ENCODE measurements at regions of chr9 and their contacts with region 1.

Region 1: DNA sequence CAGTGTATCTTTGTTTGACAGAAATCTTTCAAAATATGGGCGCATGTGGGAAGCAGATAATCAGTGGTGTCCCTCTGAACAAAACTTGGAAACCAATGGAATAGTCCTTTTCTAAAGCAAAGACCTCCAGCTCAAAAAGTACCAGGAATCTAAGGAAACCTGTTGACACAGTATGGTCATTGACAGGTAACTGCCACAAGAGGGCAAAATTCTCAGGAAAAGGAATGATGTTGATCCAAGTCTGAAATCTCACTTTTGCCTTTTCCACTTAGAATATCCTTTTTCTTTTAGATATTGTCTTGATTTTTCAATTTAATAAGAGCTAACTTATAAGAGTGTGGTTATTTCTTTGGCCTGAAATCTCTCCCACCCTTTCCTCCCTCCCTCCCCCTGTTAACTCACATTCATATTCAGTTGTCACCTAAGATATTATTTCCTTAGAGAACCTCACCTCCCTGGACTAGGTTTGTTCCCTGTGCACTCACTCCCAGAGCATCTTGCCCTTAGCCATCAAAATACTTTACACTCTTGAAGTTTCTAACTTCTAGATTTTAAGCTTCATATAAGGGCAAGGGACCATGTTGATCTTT is 59.0 kb upstream of the BARX1 start:
- DNase-seq: peak; percentile 44 to 50 (median 48)
- ATAC-seq: peak; percentile 78
- H3K4me3 ChIP-seq: no peak overlapping the region
- H3K27ac ChIP-seq: no peak overlapping the region
- H3K4me1 ChIP-seq: no peaks in the 10 kb centered on the region
- H3K27me3 ChIP-seq: peaks cover 0 to 9% of the 10 kb centered on the region in 2 experiments; a peak in 4 of 5 replicates
- CTCF ChIP-seq: peak; percentile 47 to 65 (median 56)
- EP300 ChIP-seq: no peak
- POLR2A ChIP-seq: no peak
- RAD21 ChIP-seq: peak; percentile 43 to 79

Region 2: GRCh38 chr9:94065535-94065961 is 51.4 kb after region 1 on chr9:
- CTCF ChIA-PET with region 1: no interaction called
- POLR2A ChIA-PET with region 1: no interaction called
- in situ Hi-C with region 1: no loop called
- intact Hi-C with region 1: loop called (anchors 1 kb)
- DNase-seq: peak; percentile 44 to 88 (median 54)
- ATAC-seq: peak; percentile 95
- H3K4me3 ChIP-seq: no peak overlapping the region
- H3K27ac ChIP-seq: no peak overlapping the region
- H3K4me1 ChIP-seq: peaks cover 0 to 5% of the 10 kb centered on the region in 2 experiments; a peak in 2 of 5 replicates
- H3K27me3 ChIP-seq: no peaks in the 10 kb centered on the region; a peak in 1 of 5 replicates
- CTCF ChIP-seq: peak; percentile 78 to 88 (median 84)
- EP300 ChIP-seq: no peak
- POLR2A ChIP-seq: no peak
- RAD21 ChIP-seq: peak; percentile 83 to 96

Region 3: DNA sequence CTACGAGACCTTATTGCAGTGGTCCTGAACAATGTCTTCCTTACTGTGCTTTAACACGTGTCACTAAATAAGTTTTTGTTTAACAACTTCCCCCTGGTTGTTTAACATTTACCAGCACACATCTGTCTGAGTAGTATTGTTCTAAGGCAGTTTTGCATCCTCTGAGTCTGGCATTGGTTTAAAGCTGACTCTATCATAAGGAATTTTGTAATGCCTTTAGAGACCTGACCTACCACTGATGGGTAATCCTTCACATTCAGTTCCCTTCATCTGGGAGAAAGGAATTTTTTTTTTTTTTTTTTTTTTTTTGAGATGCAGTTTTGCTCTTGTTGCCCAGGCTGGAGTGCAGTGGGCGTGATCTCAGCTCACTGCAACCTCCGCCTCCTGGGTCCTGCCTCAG is 520.7 kb after region 1 on chr9:
- CTCF ChIA-PET with region 1: no interaction called
- POLR2A ChIA-PET with region 1: no interaction called
- in situ Hi-C with region 1: no loop called
- intact Hi-C with region 1: loop called (anchors 5 kb)
- DNase-seq: no peak
- ATAC-seq: no peak
- H3K4me3 ChIP-seq: no peak overlapping the region
- H3K27ac ChIP-seq: no peak overlapping the region
- H3K4me1 ChIP-seq: no peaks in the 10 kb centered on the region
- H3K27me3 ChIP-seq: peaks cover 2 to 4% of the 10 kb centered on the region in 2 experiments; a peak in 3 of 5 replicates
- CTCF ChIP-seq: no peak
- EP300 ChIP-seq: no peak
- POLR2A ChIP-seq: no peak
- RAD21 ChIP-seq: no peak